ENCODE measurements at regions of chr13 and their contacts with region 1.

Region 1: DNA sequence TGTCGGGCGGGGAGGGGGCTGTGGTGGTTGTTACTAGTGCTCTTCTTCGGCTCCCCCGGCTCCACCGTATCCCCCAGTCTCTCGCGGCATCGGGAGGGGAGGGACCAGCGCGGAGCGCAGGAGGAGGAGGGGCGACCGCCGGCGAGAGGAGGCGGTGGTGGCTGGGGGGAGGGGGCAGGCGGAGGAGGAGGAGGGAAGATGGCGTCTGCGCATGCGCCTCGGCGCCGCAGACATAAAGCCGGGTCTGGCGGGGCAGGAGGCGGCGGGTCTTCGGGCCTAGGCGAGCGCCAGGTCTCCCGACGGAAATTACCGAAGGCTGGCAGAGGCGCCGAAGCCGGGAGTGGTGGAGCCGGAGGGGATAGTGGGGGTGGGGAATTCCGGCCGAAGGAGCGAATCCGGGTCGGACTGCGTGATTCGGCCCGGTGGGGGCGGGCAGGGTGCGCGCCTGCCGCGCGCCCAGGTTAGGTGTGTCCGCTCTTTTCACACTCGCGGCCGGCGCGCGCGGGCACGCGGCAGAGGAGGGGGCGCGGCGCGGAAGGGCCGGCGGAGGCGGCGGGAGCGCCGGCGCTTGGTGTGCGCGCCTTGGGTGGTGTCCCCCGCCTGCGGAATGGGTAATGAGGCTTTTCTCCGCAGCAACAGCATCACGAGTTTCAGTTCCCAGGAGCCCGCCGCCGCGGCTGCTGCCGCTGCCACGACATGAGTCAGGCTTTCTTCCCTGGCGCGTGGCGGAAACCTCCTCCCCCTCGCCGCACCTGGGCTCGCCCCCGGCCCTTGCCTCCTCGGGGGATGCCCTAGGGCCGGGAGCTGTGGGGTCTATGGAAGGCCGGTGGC is 1.3 kb upstream of the TSC22D1 start:
- DNase-seq: peak; percentile 83 to 95
- H3K4me3 ChIP-seq: peak overlapping the region; percentile 94
- H3K27ac ChIP-seq: peak overlapping the region; percentile 97
- H3K4me1 ChIP-seq: peaks cover 36% of the 10 kb centered on the region
- H3K27me3 ChIP-seq: no peaks in the 10 kb centered on the region
- CTCF ChIP-seq: no peak

Region 2: GRCh38 chr13:44340508-44340907 is 236.9 kb before region 1 on chr13:
- CTCF ChIA-PET with region 1: no interaction called
- POLR2A ChIA-PET with region 1: no interaction called
- intact Hi-C with region 1: no loop called
- DNase-seq: no peak
- H3K4me3 ChIP-seq: no peak overlapping the region
- H3K27ac ChIP-seq: no peak overlapping the region
- H3K4me1 ChIP-seq: peaks cover 15% of the 10 kb centered on the region
- H3K27me3 ChIP-seq: no peaks in the 10 kb centered on the region
- CTCF ChIP-seq: no peak

Region 3: GRCh38 chr13:44484562-44485138 is 92.8 kb before region 1 on chr13:
- CTCF ChIA-PET with region 1: no interaction called
- POLR2A ChIA-PET with region 1: no interaction called
- intact Hi-C with region 1: loop called (anchors 5 kb)
- DNase-seq: no peak
- H3K4me3 ChIP-seq: no peak overlapping the region
- H3K27ac ChIP-seq: peak overlapping the region; percentile 28; the same call in 1 of the 2 replicates
- H3K4me1 ChIP-seq: peaks cover 3% of the 10 kb centered on the region; the same call in 1 of the 2 replicates
- H3K27me3 ChIP-seq: no peaks in the 10 kb centered on the region
- CTCF ChIP-seq: no peak

Region 4: DNA sequence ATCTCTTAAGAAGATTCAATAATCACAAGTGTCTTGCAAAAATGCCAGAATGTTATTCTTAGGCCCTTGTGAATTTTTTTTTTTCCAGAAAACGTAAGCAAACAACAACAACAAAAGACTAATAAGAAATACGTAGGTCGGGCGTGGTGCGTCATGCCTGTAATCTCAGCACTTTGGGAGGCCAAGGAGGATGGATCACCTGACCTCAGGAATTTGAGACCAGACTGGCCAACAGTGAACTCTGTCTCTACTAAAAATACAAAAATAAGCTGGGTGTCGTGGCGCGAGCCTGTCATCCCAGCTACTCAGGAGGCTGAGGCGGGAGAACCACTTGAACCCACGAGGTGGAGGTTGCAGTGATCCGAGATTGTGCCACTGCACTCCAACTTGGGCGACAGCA is 22.3 kb before region 1 on chr13:
- CTCF ChIA-PET with region 1: no interaction called
- POLR2A ChIA-PET with region 1: interaction called, 15 read pairs
- intact Hi-C with region 1: no loop called
- DNase-seq: no peak
- H3K4me3 ChIP-seq: no peak overlapping the region
- H3K27ac ChIP-seq: peak overlapping the region; percentile 16; the same call in 1 of the 2 replicates
- H3K4me1 ChIP-seq: no peaks in the 10 kb centered on the region
- H3K27me3 ChIP-seq: no peaks in the 10 kb centered on the region
- CTCF ChIP-seq: no peak

Region 5: GRCh38 chr13:44734201-44734707 is 156.8 kb after region 1 on chr13:
- CTCF ChIA-PET with region 1: no interaction called
- POLR2A ChIA-PET with region 1: no interaction called
- intact Hi-C with region 1: loop called (anchors 1 kb)
- DNase-seq: peak; percentile 66 to 71
- H3K4me3 ChIP-seq: no peak overlapping the region
- H3K27ac ChIP-seq: peak overlapping the region; percentile 22
- H3K4me1 ChIP-seq: peaks cover 47% of the 10 kb centered on the region
- H3K27me3 ChIP-seq: no peaks in the 10 kb centered on the region
- CTCF ChIP-seq: no peak

Region 6: DNA sequence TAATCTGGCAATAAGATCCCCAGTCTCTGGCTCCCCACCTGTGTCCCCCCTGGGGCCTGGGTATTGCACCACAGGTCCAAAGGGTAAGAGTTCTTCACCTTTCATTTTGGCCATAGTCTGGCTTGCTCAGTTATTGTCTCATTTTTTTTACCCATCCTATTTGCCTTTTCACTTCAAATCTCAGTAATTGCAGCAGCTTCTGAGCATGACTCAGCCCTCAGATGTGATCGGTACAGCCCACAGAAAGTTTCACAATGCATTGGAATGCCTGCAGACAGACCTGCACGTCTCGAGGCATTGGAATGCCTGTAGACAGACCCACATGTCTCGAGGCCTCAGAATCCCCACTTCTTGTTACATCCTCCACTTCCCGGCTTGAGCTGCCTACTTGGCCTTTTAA is 238.2 kb after region 1 on chr13:
- CTCF ChIA-PET with region 1: interaction called, 3 read pairs
- POLR2A ChIA-PET with region 1: no interaction called
- intact Hi-C with region 1: loop called (anchors 1 kb)
- DNase-seq: peak; percentile 82 to 96
- H3K4me3 ChIP-seq: no peak overlapping the region
- H3K27ac ChIP-seq: peak overlapping the region; percentile 86
- H3K4me1 ChIP-seq: peaks cover 64% of the 10 kb centered on the region
- H3K27me3 ChIP-seq: no peaks in the 10 kb centered on the region
- CTCF ChIP-seq: no peak

Region 7: GRCh38 chr13:44854313-44855060 is 277.0 kb after region 1 on chr13:
- CTCF ChIA-PET with region 1: no interaction called
- POLR2A ChIA-PET with region 1: no interaction called
- intact Hi-C with region 1: no loop called
- DNase-seq: no peak
- H3K4me3 ChIP-seq: no peak overlapping the region; the same call in 1 of the 2 replicates
- H3K27ac ChIP-seq: no peak overlapping the region
- H3K4me1 ChIP-seq: peaks cover 20% of the 10 kb centered on the region
- H3K27me3 ChIP-seq: no peaks in the 10 kb centered on the region
- CTCF ChIP-seq: no peak